GM12878 (cell line): ENCODE measurements at regions of chr6 and their contacts with region 1.

Region 1: DNA sequence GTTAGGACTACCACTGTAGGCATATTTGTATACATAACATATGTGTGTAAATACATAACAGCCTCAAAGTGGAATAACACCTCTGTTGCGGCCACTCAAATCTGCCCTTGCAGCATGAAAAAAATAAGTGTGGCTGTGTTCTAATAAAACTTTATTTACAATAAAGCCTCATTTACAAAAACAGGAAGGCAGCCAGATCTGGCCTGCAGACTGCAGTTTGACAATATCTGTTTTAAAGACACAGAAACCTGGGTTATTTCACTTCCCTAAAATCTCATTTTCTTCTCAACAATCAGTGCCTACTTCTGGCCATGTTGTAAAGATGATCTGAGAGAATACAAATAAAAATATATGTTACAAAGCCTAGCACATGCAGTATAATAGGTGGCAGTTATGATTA is 53.9 kb upstream of the SCML4 start:
- DNase-seq: peak; percentile 16
- ATAC-seq: peak; percentile 78
- H3K4me3 ChIP-seq: no peak overlapping the region
- H3K27ac ChIP-seq: no peak overlapping the region; the same call in 1 of the 2 replicates
- H3K4me1 ChIP-seq: peaks cover 5% of the 10 kb centered on the region; the same call in 1 of the 2 replicates
- H3K27me3 ChIP-seq: no peaks in the 10 kb centered on the region
- CTCF ChIP-seq: no peak
- EP300 ChIP-seq: no peak
- POLR2A ChIP-seq: no peak
- RAD21 ChIP-seq: no peak

Region 2: DNA sequence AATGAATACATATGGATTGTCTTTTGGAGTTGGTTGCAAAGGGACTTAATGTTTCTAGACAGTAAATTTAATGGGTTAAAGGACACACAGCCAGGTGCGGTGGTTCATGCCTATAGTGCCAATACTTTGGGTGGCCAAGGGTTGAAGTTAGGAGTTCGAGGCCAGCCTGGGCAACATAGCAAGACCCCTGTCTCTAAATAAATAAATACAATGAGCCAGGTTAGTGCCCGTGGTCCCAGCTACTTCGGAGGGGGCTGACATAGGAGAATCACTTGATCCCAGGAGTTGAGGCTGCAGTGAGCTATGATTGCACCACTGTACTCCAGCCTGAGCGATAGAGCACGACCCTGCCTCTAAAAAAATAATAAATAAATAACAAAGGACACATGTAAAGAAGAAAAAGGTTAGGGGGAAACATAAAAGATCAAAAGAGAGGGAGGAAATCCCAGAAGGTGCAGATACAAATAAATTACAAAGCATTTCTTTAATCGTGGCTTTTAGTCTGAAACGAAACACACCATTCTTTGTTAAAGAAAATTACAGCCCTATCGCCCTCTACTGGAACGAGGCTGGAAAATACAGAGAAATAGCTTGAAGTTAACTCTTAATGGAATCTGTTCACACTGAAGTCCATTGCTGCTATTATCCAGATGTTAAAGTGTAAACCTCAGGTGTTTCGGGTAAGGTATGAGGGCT is 11.2 kb before region 1 on chr6:
- CTCF ChIA-PET with region 1: interaction called, 5 read pairs
- POLR2A ChIA-PET with region 1: no interaction called
- RAD21 ChIA-PET with region 1: no interaction called
- SMC1A ChIA-PET with region 1: interaction called, 10 read pairs
- in situ Hi-C with region 1: no loop called
- intact Hi-C with region 1: no loop called
- DNase-seq: no peak
- ATAC-seq: peak; percentile 74
- H3K4me3 ChIP-seq: no peak overlapping the region
- H3K27ac ChIP-seq: no peak overlapping the region
- H3K4me1 ChIP-seq: 0 out of 2 replicates have a peak, but pooled peaks cover 5% of the 10 kb centered on the region
- H3K27me3 ChIP-seq: no peaks in the 10 kb centered on the region
- CTCF ChIP-seq: peak; percentile 35 to 68 (median 35); a peak in 5 of 6 replicates
- EP300 ChIP-seq: no peak
- POLR2A ChIP-seq: no peak
- RAD21 ChIP-seq: peak; percentile 31; the same call in 1 of the 2 replicates

Region 3: DNA sequence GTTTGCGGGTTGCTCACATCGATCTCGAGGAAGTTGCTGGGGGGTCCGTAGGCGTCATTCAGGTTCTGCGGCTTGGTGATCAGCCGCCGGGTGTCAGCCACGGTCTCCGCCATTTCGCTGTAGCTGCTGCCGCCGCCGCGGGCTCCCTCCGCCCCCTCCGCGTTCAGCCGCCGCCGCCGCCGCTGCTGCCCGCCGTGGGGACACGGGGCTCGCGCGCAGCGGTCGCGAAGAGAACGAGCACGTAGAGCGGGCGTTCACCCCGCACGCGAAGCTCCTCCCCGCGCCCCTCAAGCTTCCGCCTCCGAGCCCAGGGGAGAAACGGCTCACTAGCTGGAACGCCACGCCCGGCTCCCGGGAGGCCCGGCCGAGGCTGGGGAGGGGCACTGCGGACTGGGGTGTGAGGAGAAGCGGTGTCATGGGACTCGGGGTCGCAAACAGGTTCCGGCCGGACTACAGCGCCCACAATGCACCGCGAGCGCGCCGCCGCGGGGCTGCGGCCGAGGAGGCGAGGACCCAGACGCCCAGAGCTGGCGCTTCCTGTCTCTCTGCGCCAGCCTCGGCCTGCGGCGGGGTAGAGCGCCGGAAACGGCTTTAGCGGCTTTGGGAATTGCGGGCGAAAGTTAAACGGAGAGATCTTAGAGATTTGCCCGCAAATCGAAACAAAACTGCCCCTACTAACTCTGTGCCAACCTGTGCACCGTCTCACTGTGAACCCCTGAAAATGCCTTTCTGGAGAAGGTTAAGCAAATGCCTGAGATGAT is 383.0 kb after region 1 on chr6 and contains the start of gene SNX3:
- CTCF ChIA-PET with region 1: no interaction called
- POLR2A ChIA-PET with region 1: no interaction called
- RAD21 ChIA-PET with region 1: no interaction called
- SMC1A ChIA-PET with region 1: no interaction called
- in situ Hi-C with region 1: no loop called
- intact Hi-C with region 1: no loop called
- DNase-seq: peak; percentile 91
- ATAC-seq: peak; percentile 93
- H3K4me3 ChIP-seq: peak within 1 kb of the TSS; percentile 94
- H3K27ac ChIP-seq: peak within 1 kb of the TSS; percentile 99
- H3K4me1 ChIP-seq: peaks cover 8% of the 10 kb centered on the region
- H3K27me3 ChIP-seq: no peaks in the 10 kb centered on the region
- CTCF ChIP-seq: 0 out of 6 replicates have a peak, but pooled peaks of 1 of the 3 experiments have one; percentile 11
- EP300 ChIP-seq: peak in 1 of 2 experiments; percentile 38; a peak in 1 of 4 replicates
- POLR2A ChIP-seq: peak; percentile 88
- RAD21 ChIP-seq: 0 out of 2 replicates have a peak, but pooled peaks have one; percentile 5
- polyA plus RNA-seq, gene SNX3: 43.7 to 78.6 TPM